Keratinocyte (primary cell): ENCODE measurements at regions of chr1 and their contacts with region 1.

Region 1: DNA sequence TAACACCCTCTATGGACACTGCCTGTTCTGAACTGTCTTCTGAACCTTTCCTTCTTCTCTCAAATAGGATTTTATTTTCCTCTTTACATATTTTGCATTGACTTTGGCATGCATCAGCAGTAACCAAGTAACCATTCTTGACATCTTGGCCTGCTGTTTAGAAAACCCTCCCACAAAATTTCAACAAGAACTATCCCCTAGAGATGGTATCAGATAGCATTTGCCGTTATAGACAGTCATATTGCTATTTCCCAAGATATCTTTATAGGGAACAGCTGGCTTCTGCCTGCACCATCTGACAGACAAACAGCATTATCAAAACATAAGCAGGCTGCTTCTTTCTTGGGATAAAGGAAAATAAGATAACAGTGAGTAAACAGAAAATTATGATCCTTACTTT is 54.7 kb downstream of the LHX8 start:
- DNase-seq: no peak
- H3K4me3 ChIP-seq: no peak overlapping the region
- H3K27ac ChIP-seq: no peak overlapping the region
- H3K4me1 ChIP-seq: no peaks in the 10 kb centered on the region
- H3K27me3 ChIP-seq: no peaks in the 10 kb centered on the region
- CTCF ChIP-seq: no peak

Region 2: DNA sequence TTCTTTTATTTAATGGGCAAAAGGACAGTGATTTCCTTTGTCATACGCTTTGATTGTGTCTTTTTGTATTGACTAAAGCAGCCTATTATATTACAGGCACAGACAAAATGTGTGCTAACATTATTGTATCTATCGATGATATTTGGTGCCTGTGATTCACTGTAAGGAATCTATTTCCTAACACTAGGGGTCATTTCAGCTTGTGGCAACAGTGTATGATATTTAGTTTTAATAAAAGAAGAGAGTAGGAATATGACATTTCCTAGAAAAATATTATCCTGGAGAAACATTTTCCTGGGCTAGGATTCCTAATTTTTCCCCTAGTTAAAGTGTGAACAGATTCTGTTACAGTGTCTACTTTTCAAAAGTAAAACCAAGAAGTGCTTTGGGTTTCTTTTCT is 413.2 kb before region 1 on chr1:
- dilution Hi-C with region 1: loop called (anchors 25 kb)
- DNase-seq: no peak
- H3K4me3 ChIP-seq: no peak overlapping the region
- H3K27ac ChIP-seq: no peak overlapping the region
- H3K4me1 ChIP-seq: no peaks in the 10 kb centered on the region
- H3K27me3 ChIP-seq: no peaks in the 10 kb centered on the region
- CTCF ChIP-seq: no peak